ENCODE measurements at regions of chr15 and their contacts with region 1.

Region 1: DNA sequence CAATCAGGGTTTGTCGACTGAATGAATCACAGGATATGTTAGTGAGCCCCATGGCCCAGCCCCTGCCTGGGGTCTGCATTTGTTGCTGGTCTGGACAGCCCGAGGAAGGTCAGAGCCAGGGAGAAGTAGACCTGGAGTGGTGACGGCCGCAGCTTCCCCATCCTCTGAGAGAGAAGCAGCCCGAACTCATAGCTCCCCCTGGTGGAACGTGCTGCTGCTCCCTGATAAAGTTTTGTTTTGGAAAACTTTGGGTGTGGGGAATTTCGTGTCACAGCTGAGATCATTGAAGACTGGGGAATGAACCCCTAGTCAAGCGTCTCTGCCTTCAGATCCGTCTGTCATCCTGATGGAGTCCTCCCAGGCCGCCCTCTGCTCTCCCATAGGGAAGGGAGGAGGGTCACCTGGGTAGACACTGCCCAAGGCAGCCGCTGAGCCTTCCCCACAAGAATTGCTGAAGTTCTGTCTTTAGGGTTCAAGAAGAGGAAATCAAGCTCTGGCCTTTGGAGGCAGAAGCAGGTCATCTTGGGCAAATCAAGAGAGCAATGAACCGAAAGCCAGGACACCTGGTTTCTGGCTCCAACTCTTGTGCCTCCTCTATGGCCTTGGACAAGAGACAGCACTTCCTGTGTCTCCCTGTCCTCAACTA is 60.5 kb downstream of the GLDN start:
- DNase-seq: peak; percentile 44 to 80
- ATAC-seq: peak; percentile 41 to 82; a peak in 5 of 6 replicates
- H3K4me3 ChIP-seq: no peak overlapping the region
- H3K27ac ChIP-seq: no peak overlapping the region
- H3K4me1 ChIP-seq: no peaks in the 10 kb centered on the region
- CTCF ChIP-seq: peak; percentile 57
- EP300 ChIP-seq: no peak
- POLR2A ChIP-seq: no peak
- RAD21 ChIP-seq: peak; percentile 48 to 74; a peak in 3 of 5 replicates

Region 2: GRCh38 chr15:51172193-51172592 is 229.8 kb before region 1 on chr15:
- CTCF ChIA-PET with region 1: interaction called, 10 read pairs
- POLR2A ChIA-PET with region 1: no interaction called
- DNase-seq: no peak
- ATAC-seq: no peak
- H3K4me3 ChIP-seq: no peak overlapping the region
- H3K27ac ChIP-seq: no peak overlapping the region
- H3K4me1 ChIP-seq: no peaks in the 10 kb centered on the region
- CTCF ChIP-seq: no peak
- EP300 ChIP-seq: no peak
- POLR2A ChIP-seq: no peak
- RAD21 ChIP-seq: no peak

Region 3: DNA sequence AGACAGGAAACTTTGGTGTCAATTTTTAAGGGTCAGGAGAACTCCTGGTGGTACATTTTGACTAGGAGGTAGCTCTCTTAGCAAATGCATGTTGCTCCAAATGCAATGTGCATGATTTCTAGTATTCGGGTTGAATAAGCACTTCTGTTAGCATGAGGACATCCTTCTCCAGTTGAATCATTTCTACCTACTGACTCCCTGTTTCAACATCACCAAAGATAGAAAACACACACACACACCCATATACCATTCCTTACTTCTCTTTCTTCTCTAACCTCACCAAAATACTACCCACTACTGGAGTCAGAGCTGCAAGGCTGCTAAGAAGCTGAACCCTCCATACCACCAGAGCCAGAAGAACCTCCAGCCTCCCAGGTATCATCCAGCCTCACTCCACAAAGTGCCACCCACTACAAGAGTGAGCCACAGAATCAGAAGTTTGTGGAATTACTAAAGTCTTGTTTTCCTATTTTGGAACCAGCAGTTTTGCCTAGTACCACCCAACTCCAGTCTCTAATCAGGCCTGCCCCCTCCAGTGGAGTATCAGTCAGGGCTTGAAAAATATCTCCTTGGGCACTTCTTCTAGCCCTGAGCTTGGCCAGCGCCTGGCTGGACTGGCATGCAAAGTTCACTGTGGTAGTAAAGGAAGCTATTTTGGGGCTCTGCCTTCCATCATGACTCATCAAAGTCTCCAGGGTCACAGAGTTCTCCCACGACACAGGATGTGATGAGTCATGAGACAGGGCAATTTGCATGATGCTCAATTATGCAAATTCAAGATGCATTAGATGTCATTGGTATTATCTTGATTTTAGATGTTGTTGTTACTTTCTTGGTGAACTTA is 173.8 kb before region 1 on chr15:
- CTCF ChIA-PET with region 1: interaction called, 60 read pairs
- POLR2A ChIA-PET with region 1: no interaction called
- DNase-seq: peak; percentile 69 to 72
- ATAC-seq: peak; percentile 71 to 73
- H3K4me3 ChIP-seq: no peak overlapping the region
- H3K27ac ChIP-seq: peak overlapping the region; percentile 31 to 68; a peak in 5 of 6 replicates
- H3K4me1 ChIP-seq: peaks cover 14% of the 10 kb centered on the region
- CTCF ChIP-seq: no peak
- EP300 ChIP-seq: no peak
- POLR2A ChIP-seq: no peak
- RAD21 ChIP-seq: no peak

Region 4: GRCh38 chr15:51267703-51268083 is 134.3 kb before region 1 on chr15:
- CTCF ChIA-PET with region 1: interaction called, 11 read pairs
- POLR2A ChIA-PET with region 1: no interaction called
- DNase-seq: peak in 1 of 2 experiments; percentile 62
- ATAC-seq: peak; percentile 61 to 82; a peak in 4 of 6 replicates
- H3K4me3 ChIP-seq: peak overlapping the region; percentile 44
- H3K27ac ChIP-seq: peak overlapping the region in 1 of 2 experiments; percentile 65; a peak in 3 of 6 replicates
- H3K4me1 ChIP-seq: peaks cover 6% of the 10 kb centered on the region; the same call in 2 of the 3 replicates
- CTCF ChIP-seq: no peak
- EP300 ChIP-seq: no peak
- POLR2A ChIP-seq: no peak
- RAD21 ChIP-seq: no peak

Region 5: DNA sequence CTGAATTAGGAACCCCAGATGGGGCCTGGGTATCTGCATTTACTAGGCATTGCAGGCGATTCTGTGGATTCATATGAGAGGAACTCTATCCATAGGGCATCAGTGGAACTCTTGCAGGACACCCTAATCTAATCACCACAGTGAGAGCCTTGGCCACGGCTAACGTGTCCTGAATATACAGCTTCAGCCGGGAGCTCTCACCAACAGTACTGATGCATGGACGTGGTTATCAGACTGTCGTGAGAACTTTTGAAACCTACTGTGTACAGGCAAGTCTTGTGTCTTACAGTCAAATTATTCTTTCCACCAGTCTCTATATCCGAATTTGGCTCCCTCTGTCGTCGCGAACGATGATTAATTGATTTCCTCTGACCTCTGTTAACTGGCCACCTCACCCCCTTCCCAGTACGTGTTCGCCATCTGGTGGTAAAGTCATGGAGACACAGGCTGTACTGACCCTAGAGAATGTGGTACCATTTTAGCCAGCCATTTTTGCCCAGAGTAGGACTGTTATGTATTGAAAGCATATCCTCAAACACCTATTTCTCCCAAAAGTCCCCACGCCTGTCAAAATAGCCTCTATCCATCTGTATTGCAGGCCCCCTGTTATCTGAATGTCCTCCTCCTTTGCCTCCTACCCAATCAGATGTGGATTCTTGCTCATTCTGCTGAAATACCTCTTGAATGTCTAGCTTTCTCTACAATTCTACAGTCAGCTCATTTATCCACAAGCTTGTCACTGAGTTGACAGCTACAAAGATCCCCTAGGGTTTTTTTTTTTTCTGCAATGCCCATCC is 20.8 kb before region 1 on chr15:
- CTCF ChIA-PET with region 1: interaction called, 96 read pairs
- POLR2A ChIA-PET with region 1: no interaction called
- DNase-seq: peak; percentile 72 to 78
- ATAC-seq: peak; percentile 90 to 97
- H3K4me3 ChIP-seq: no peak overlapping the region
- H3K27ac ChIP-seq: no peak overlapping the region
- H3K4me1 ChIP-seq: no peaks in the 10 kb centered on the region
- CTCF ChIP-seq: peak; percentile 96
- EP300 ChIP-seq: no peak
- POLR2A ChIP-seq: no peak
- RAD21 ChIP-seq: peak; percentile 97 to 99

Region 6: GRCh38 chr15:51414257-51415044 is 12.5 kb after region 1 on chr15:
- CTCF ChIA-PET with region 1: interaction called, 37 read pairs
- POLR2A ChIA-PET with region 1: no interaction called
- DNase-seq: no peak
- ATAC-seq: no peak; a peak in 1 of 6 replicates
- H3K4me3 ChIP-seq: no peak overlapping the region
- H3K27ac ChIP-seq: no peak overlapping the region
- H3K4me1 ChIP-seq: no peaks in the 10 kb centered on the region
- CTCF ChIP-seq: no peak
- EP300 ChIP-seq: no peak
- POLR2A ChIP-seq: no peak
- RAD21 ChIP-seq: no peak